ENCODE measurements at regions of chr1 and their contacts with region 1.

Region 1: DNA sequence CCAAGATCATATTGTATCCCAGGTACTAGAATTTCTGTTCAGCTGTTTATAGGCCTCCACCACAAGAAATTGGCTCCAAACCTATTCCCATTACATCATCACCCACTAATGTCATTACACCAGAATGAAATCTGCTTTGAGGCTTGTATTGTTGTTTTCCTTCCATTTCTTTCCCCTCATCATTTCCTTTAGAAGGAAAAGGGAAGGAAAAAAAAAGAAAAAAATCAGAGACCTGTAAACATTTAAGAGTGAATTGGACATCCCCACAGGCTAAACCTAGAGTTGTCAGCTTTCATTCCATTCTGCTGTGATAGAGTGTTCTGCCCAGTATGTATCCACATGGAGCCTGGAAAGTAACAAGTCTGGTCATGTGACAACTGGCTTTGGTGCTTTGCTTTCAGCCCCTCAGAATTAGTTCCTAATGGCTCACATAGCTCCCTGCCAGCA is 44.6 kb downstream of the NFYC start:
- DNase-seq: no peak
- ATAC-seq: no peak
- H3K4me3 ChIP-seq: no peak overlapping the region
- H3K27ac ChIP-seq: no peak overlapping the region
- H3K4me1 ChIP-seq: peaks cover 5% of the 10 kb centered on the region; the same call in 1 of the 2 replicates
- H3K27me3 ChIP-seq: no peaks in the 10 kb centered on the region
- CTCF ChIP-seq: no peak

Region 2: DNA sequence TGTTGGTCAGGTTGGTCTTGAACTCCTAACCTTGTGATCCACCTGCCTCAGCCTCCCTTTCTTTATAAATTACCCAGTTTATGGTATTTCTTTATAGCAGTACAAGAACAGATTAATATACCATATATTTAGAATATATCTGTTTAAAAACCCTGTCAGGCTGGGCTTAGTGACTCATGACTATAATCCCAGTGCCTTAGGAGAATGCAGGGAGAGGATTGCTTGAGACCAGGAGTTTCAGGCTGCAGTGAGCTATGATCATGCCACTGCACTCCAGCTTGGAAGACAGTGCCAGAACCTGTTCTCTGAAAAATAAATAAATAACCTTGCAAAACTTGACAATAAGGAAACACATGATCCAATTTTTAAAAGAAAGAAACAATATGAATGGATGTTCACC is 160.8 kb before region 1 on chr1:
- CTCF ChIA-PET with region 1: no interaction called
- POLR2A ChIA-PET with region 1: interaction called, 11 read pairs
- in situ Hi-C with region 1: no loop called
- intact Hi-C with region 1: no loop called
- DNase-seq: no peak
- ATAC-seq: no peak
- H3K4me3 ChIP-seq: no peak overlapping the region
- H3K27ac ChIP-seq: no peak overlapping the region
- H3K4me1 ChIP-seq: no peaks in the 10 kb centered on the region
- H3K27me3 ChIP-seq: no peaks in the 10 kb centered on the region
- CTCF ChIP-seq: no peak